Naive thymus-derived CD4-positive, alpha-beta T cell (primary cell): ENCODE measurements at regions of chr2 and their contacts with region 1.

Region 1: GRCh38 chr2:129849559-129850160 is 129.8 kb upstream of the RAB6C start:
- DNase-seq: peak in 7 of 9 donors; percentile 28 to 71 (median 59)
- ATAC-seq: peak; percentile 95
- H3K4me3 ChIP-seq: no peak overlapping the region
- H3K4me3 Mint-ChIP-seq: peak overlapping the region in 4 of 10 donors; percentile 7 to 57 (median 24)
- H3K27ac ChIP-seq: no peak overlapping the region
- H3K27ac Mint-ChIP-seq: no peak overlapping the region
- H3K4me1 ChIP-seq: no peaks in the 10 kb centered on the region
- H3K4me1 Mint-ChIP-seq: peaks cover 0 to 5% (median 0%) of the 10 kb centered on the region in 7 donors
- H3K27me3 ChIP-seq: no peaks in the 10 kb centered on the region
- H3K27me3 Mint-ChIP-seq: peaks cover 8 to 35% (median 20%) of the 10 kb centered on the region in 5 donors

Region 2: DNA sequence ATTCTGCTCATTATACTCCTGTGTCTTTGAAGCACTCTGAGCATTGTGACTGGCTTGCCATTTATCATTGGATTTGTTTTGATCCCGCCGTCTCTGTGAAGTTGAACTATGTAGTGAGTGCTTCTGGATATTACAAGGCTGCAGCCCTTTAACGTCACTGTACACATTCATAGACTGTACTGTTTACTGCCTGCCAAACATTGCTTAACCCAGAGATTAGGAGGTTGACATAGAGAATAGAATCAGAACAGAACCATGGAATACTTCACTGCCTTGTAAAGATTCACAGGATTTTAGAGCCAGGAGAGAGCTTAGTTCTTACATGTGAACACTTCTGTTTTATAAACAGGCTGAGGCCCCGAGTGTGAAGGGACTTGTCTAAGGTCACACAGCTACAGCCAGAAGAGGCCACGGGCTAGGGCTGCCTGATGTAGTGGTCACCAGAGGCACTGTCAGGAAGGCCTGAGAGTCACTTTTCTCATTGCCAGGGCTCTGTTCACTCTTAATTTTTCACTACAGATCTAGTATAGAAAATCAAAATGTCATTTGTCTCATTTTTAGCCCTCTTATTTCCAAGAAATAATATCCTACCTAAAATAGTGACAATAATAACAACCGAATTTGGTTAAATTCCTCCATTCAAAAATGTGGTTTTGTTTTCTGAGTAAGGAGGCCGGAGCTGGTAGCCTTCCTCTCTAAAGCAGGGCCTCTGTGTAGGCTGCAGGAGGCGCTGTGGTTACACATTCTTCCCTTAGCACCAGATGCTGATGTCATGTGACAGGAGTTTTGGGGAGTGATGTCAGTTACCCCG is 1670.8 kb before region 1 on chr2:
- CTCF ChIA-PET with region 1: no interaction called
- POLR2A ChIA-PET with region 1: no interaction called
- intact Hi-C with region 1: loop called in 1 of 2 experiments (anchors 5 kb)
- DNase-seq: peak in 8 of 9 donors; percentile 19 to 53 (median 36)
- ATAC-seq: peak; percentile 92
- H3K4me3 ChIP-seq: no peak overlapping the region
- H3K4me3 Mint-ChIP-seq: no peak overlapping the region
- H3K27ac ChIP-seq: no peak overlapping the region
- H3K27ac Mint-ChIP-seq: no peak overlapping the region
- H3K4me1 ChIP-seq: no peaks in the 10 kb centered on the region
- H3K4me1 Mint-ChIP-seq: peaks cover 0 to 8% (median 0%) of the 10 kb centered on the region in 7 donors
- H3K27me3 ChIP-seq: no peaks in the 10 kb centered on the region
- H3K27me3 Mint-ChIP-seq: no peaks in the 10 kb centered on the region

Region 3: GRCh38 chr2:129877289-129877779 is 27.7 kb after region 1 on chr2:
- CTCF ChIA-PET with region 1: interaction called, 4 read pairs
- POLR2A ChIA-PET with region 1: no interaction called
- intact Hi-C with region 1: loop called in 1 of 2 experiments (anchors 1 kb)
- DNase-seq: peak; percentile 61 to 82 (median 78)
- ATAC-seq: peak; percentile 95
- H3K4me3 ChIP-seq: peak overlapping the region; percentile 96
- H3K4me3 Mint-ChIP-seq: peak overlapping the region; percentile 86 to 99 (median 96)
- H3K27ac ChIP-seq: peak overlapping the region; percentile 78
- H3K27ac Mint-ChIP-seq: peak overlapping the region; percentile 77 to 97 (median 92)
- H3K4me1 ChIP-seq: peaks cover 5 to 7% of the 10 kb centered on the region in 2 donors
- H3K4me1 Mint-ChIP-seq: peaks cover 6 to 18% (median 13%) of the 10 kb centered on the region in 7 donors
- H3K27me3 ChIP-seq: no peaks in the 10 kb centered on the region
- H3K27me3 Mint-ChIP-seq: peaks cover 0 to 2% (median 0%) of the 10 kb centered on the region in 5 donors